Esophagus squamous epithelium (tissue), 5 donors: ENCODE measurements at regions of chr4 and their contacts with region 1.

Region 1: DNA sequence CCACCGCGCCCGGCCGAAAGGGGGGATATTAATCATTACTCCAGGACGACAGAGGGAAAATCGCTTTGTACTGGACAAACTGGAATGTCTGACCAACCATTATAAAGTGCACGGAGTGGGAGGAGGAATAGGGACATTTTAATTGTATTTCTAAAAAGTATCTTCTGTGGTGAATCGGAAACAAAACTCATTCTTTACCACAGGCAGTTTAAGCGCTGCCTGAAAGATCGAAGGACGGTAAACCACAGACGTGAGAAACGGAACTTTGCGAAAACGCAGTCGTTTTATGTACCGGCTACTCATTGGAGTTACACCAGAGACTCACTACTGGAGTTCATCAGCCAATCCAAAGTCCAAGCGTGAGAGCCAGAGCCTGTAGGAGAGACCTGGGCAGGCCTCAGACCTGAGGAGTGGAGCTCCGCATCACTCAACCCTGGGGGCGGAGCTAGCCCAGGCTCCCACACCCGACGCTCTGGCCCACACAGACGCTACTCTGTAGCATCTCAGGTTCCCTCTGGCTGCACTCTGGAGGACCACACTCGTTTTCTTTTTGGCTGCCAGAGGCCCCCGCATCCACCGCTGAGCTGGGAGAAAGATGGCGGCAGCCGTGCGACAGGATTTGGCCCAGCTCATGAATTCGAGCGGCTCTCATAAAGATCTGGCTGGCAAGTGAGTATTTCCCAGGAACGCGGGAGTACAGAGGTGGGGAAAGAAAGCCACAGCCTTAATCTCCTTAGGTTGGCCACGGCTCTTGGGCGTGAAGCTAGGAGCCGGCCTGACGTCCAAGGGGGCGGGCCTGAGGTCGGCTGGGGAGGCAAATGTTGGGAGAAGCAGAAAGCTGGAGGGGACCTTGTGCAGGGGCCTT is at the start of gene COPS4:
- DNase-seq: peak; percentile 89
- H3K4me3 ChIP-seq: peak within 1 kb of the TSS; percentile 57 to 79 (median 74)
- H3K27ac ChIP-seq: peak within 1 kb of the TSS; percentile 87 to 93 (median 90)
- H3K4me1 ChIP-seq: peaks cover 6 to 28% (median 15%) of the 10 kb centered on the region in 3 donors
- H3K27me3 ChIP-seq: no peaks in the 10 kb centered on the region
- CTCF ChIP-seq: peak; percentile 16 to 68 (median 58)
- POLR2A ChIP-seq: peak in 3 of 4 donors; percentile 12 to 71 (median 37)
- total RNA-seq, gene COPS4: 22.5 to 56.8 (median 39.9) TPM

Region 2: DNA sequence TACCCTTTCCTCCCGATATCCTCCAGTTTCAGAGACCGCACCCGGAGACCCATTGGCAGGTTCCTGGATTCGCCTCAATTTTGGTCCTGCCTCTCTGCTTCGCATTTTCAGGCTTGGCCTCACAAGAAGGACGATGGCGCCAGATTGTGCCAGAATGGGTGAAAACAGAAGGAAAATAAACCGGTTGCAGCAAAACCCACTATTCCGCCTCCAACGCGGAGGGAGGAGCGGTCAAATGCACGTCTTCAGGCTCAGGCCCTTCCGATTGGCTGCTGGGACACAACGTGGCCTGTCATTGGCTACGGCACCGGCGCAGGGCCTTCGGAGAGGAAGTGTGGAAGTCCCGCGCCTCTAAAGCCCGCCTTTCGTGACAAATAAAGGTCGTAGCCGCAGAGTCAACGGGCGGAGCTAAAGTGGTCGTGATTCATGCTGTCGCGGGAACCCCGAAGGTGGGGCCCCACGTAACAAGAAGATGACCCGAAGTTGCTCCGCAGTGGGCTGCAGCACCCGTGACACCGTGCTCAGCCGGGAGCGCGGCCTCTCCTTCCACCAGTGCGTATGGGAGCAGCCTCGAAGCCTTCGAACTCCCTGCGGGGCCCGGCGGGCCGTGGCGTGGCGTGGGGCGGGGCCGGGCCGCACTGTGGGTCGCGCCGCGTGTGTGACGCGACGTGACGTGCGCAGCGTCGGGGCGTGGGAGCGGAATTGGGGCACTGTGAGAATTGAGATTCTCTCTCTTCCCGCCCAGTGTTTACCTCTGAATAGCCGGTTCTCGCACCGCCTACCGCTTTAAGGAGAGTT is 134.3 kb before region 1 on chr4 and contains the start of gene THAP9:
- intact Hi-C with region 1: loop called (anchors 10 kb)
- DNase-seq: peak; percentile 95
- H3K4me3 ChIP-seq: peak within 1 kb of the TSS; percentile 61 to 87 (median 72)
- H3K27ac ChIP-seq: peak within 1 kb of the TSS; percentile 96 to 100 (median 98)
- H3K4me1 ChIP-seq: peaks cover 8 to 52% (median 17%) of the 10 kb centered on the region in 3 donors
- H3K27me3 ChIP-seq: no peaks in the 10 kb centered on the region
- CTCF ChIP-seq: peak in 1 of 6 experiments; percentile 3
- POLR2A ChIP-seq: peak in 3 of 4 donors; percentile 60 to 92 (median 72)
- total RNA-seq, gene THAP9: 1.1 to 6.2 (median 2.8) TPM

Region 3: DNA sequence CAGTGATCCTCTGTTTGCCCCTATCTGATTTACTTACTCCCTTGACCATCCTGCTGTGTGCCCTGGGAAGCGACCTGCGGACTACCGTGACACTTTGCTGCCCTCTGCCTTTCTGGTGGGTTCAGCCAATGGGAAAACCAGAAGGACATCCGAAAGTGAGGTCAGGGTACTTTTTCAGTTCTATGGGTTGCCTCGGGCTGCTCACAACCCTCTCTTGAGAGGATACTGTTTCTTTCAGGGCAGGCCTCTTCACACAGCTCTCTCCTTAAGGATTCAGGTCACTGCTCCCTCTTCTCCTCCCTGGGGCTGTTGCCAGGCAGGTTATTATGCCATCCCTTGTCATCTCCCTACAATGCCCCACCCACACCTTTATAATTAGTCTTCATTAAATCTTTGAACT is 58.3 kb after region 1 on chr4:
- intact Hi-C with region 1: no loop called
- DNase-seq: no peak
- H3K4me3 ChIP-seq: no peak overlapping the region
- H3K27ac ChIP-seq: no peak overlapping the region
- H3K4me1 ChIP-seq: peaks cover 0 to 4% (median 0%) of the 10 kb centered on the region in 3 donors
- H3K27me3 ChIP-seq: no peaks in the 10 kb centered on the region
- CTCF ChIP-seq: no peak
- POLR2A ChIP-seq: no peak